CD14-positive monocyte (primary cell): ENCODE measurements at regions of chr13 and their contacts with region 1.

Region 1: GRCh38 chr13:75549262-75550158 is at the start of gene UCHL3:
- DNase-seq: peak; percentile 95 to 98 (median 95)
- H3K4me3 ChIP-seq: peak within 1 kb of the TSS; percentile 80 to 94 (median 92)
- H3K4me3 Mint-ChIP-seq: peak within 1 kb of the TSS; percentile 96 to 99
- H3K27ac ChIP-seq: peak within 1 kb of the TSS; percentile 69 to 91
- H3K27ac Mint-ChIP-seq: peak within 1 kb of the TSS; percentile 93 to 100 (median 99)
- H3K4me1 ChIP-seq: peaks cover 18 to 25% of the 10 kb centered on the region in 2 donors
- H3K4me1 Mint-ChIP-seq: peaks cover 31% of the 10 kb centered on the region
- H3K27me3 ChIP-seq: no peaks in the 10 kb centered on the region
- H3K27me3 Mint-ChIP-seq: no peaks in the 10 kb centered on the region
- CTCF ChIP-seq: peak; percentile 87
- polyA plus RNA-seq, gene UCHL3: 22.4 to 66.8 (median 51.8) TPM

Region 2: GRCh38 chr13:75482070-75482819 is 67.3 kb before region 1 on chr13 and contains the start of gene TBC1D4:
- intact Hi-C with region 1: loop called in 1 of 2 experiments (anchors 5 kb)
- DNase-seq: peak; percentile 79 to 83 (median 80)
- H3K4me3 ChIP-seq: peak within 1 kb of the TSS; percentile 75 to 95 (median 78)
- H3K4me3 Mint-ChIP-seq: peak within 1 kb of the TSS; percentile 99
- H3K27ac ChIP-seq: peak within 1 kb of the TSS; percentile 45 to 69
- H3K27ac Mint-ChIP-seq: peak within 1 kb of the TSS; percentile 70 to 89 (median 84)
- H3K4me1 ChIP-seq: peaks cover 28 to 47% of the 10 kb centered on the region in 2 donors
- H3K4me1 Mint-ChIP-seq: peaks cover 46% of the 10 kb centered on the region
- H3K27me3 ChIP-seq: peaks cover 20 to 28% of the 10 kb centered on the region in 2 donors
- H3K27me3 Mint-ChIP-seq: peaks cover 36 to 53% (median 45%) of the 10 kb centered on the region in 3 donors
- CTCF ChIP-seq: peak; percentile 88
- polyA plus RNA-seq, gene TBC1D4: 2.0 to 6.7 (median 2.5) TPM

Region 3: GRCh38 chr13:75507027-75508001 is 42.2 kb before region 1 on chr13:
- intact Hi-C with region 1: loop called in 1 of 2 experiments (anchors 5 kb)
- DNase-seq: peak; percentile 27 to 72 (median 38)
- H3K4me3 ChIP-seq: no peak overlapping the region
- H3K4me3 Mint-ChIP-seq: no peak overlapping the region
- H3K27ac ChIP-seq: no peak overlapping the region
- H3K27ac Mint-ChIP-seq: peak overlapping the region in 1 of 7 donors; percentile 50
- H3K4me1 ChIP-seq: peaks cover 42 to 48% of the 10 kb centered on the region in 2 donors
- H3K4me1 Mint-ChIP-seq: peaks cover 38% of the 10 kb centered on the region
- H3K27me3 ChIP-seq: no peaks in the 10 kb centered on the region
- H3K27me3 Mint-ChIP-seq: peaks cover 0 to 4% (median 0%) of the 10 kb centered on the region in 3 donors
- CTCF ChIP-seq: no peak

Region 4: DNA sequence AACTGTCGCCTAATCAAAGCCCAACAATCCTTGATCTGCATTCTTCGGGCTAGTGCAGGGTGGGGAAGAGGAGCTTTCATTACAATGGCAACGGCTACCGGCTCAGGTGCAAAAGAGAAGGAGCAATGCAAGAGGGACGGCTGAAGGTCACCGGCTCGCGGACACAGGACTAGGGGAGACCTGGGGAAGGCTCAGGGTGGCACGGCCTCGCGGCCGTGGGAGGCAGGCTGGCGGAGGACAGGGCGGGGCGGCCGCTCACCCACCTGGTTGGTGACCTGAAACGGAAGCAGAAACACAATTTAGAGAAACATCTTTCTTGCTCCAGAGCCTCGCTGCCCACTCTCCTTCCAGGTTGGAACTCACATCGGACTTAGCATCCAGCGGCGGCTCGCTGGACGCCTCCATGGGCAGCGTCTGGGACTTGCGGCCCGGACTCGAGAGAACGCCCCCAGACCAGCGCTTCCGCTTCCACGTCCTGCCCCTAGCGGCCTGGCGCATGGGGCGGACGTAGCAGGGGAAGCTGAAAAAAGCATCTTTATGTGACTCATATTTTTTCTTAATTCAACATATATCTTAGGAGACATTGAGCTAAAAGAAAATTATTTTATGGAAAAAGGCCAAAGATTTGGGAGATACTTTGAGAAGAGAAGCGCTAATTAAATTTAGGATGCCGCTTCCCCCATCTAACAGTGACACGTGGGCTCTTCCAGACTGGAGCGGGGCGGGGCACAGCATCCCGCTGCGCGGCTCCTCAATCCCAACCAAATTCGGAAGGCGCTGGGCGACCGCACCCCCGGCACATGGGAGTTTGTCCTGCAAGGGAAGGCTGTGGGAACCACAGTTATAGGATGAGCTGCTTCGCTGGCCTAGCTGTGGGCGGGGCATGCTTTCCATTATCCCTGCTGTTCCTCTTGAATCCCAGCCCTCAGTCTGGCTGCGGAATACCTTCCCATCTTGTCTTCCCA is 11.8 kb before region 1 on chr13 and contains the start of gene COMMD6:
- intact Hi-C with region 1: loop called in 1 of 2 experiments (anchors 2 kb)
- DNase-seq: peak; percentile 69 to 72 (median 71)
- H3K4me3 ChIP-seq: peak within 1 kb of the TSS; percentile 64 to 98 (median 81)
- H3K4me3 Mint-ChIP-seq: peak within 1 kb of the TSS; percentile 95 to 97
- H3K27ac ChIP-seq: peak within 1 kb of the TSS; percentile 25 to 87
- H3K27ac Mint-ChIP-seq: peak within 1 kb of the TSS; percentile 84 to 95 (median 93)
- H3K4me1 ChIP-seq: peaks cover 22 to 34% of the 10 kb centered on the region in 2 donors
- H3K4me1 Mint-ChIP-seq: peaks cover 37% of the 10 kb centered on the region
- H3K27me3 ChIP-seq: no peaks in the 10 kb centered on the region
- H3K27me3 Mint-ChIP-seq: peaks cover 0 to 1% (median 0%) of the 10 kb centered on the region in 3 donors
- CTCF ChIP-seq: peak; percentile 46
- polyA plus RNA-seq, gene COMMD6: 180 to 401 (median 330) TPM